Left colon (tissue), 2 donors: ENCODE measurements at regions of chr11 and their contacts with region 1.

Region 1: DNA sequence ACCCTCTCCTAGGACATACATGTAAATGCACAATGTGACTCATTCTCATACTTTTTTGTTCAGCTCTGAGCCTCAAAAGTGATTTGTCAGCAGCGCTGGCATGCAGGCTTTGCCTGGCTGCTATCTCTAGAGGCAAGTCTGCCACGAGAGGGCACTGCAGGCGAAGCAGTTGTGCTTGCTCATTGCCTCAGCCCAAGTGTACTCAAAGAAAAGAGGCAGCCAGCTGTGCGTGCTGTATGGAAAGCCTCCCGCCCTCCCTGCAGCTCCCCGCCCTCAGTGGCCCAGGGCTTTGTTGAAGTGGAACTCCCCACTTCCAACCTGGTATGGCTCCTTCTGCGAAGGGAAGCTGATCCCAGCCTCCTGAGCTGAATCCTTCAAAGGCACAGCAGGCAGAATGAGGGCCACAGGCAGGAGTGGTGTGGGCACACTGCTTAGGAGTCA is 16.3 kb downstream of the SDHAF2 start:
- DNase-seq: peak; percentile 83 to 94
- ATAC-seq: peak; percentile 93

Region 2: GRCh38 chr11:61294717-61295595 is 151.3 kb before region 1 on chr11 and contains the start of gene VWCE:
- intact Hi-C with region 1: no loop called
- DNase-seq: peak; percentile 33 to 68
- ATAC-seq: peak; percentile 87
- total RNA-seq, gene VWCE: 0.36 to 0.76 TPM

Region 3: DNA sequence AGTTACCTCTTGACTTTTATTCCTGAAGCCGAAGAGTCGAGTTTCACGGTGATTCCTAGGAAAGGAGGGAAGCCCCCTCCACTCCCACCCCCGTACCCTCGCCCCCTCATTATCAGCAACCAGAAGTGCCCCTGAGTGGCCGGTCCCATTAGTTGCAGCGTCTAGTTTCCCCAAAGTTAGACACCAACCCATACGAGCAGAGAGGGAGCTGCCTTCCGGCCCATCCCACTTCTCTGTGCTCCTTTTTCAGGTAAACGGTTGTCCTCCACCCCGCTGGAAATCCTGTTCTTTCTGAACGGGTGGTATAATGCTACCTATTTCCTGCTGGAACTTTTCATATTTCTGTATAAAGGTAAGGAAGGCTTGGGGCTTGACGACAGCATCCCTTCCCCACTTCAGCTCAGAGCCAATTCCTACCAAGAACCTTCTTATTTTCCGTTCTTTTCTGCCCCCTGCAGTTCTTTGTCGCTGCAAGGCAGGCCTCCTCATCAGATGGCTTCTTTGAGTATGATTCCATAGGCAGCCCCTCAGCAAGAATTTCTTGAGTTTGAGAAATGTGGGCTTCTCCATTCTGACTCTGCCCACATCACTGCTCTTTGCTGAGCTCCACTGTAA is 53.1 kb before region 1 on chr11:
- intact Hi-C with region 1: no loop called
- DNase-seq: no peak
- ATAC-seq: peak; percentile 42

Region 4: DNA sequence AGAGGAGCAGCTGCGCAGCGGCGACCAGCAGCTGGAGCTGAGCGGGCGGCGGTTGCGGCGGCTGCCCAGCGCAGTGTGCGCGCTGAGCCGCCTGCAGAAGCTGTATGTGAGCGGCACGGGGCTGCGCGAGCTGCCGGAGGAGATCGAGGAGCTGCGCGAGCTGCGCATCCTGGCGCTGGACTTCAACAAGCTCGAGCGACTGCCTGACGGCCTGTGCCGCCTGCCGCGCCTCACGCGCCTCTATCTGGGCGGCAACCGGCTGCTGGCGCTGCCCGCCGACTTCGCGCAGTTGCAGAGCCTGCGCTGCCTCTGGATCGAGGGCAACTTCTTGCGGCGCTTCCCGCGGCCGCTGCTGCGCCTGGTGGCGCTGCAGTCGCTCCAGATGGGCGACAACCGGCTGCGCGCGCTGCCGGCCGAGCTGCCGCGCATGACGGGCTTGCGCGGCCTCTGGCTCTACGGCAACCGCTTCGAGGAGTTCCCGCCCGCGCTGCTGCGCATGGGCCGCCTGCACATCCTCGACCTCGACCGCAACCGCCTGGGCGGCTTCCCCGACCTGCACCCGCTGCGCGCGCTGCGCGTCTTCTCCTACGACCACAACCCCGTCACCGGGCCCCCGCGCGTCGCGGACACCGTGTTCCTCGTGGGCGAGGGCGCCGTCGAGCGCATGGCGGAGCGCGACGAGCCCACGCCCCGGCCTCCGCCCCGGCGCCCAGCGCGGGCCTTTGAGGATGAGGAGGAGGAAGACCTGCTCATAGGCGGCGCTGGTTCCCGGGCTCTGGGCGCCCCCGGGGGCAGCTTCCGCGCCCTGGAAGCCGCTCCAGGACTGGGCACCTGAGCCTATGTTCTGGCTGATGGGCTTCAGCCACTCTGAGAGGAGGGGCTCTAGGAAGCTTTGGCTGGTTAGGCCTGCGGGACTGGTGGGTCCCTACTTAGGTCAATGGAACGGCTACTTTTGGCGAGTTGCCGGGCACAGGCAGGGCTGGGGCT is 63.1 kb after region 1 on chr11:
- intact Hi-C with region 1: loop called in 1 of 2 experiments (anchors 10 kb)
- DNase-seq: peak; percentile 63 to 73
- ATAC-seq: peak; percentile 68

Region 5: DNA sequence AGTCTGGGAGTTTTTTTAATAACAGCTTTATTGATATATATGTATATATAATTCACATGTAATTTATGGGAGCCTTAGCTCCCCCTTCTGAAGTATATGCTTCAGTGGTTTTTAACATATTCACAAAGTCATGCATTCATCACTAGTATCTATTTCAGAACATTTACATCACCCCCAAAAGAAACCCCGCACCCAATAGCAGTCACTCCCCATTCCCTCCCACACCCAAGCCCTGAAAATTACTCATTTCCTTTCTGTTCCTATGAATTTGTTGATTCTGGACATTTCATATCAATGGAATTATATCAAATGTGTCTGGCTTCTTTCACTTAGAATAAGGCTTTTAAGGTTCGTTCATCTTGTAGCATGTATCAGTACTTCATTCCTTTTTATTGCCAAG is 170.2 kb after region 1 on chr11:
- intact Hi-C with region 1: no loop called
- DNase-seq: no peak
- ATAC-seq: no peak

Region 6: DNA sequence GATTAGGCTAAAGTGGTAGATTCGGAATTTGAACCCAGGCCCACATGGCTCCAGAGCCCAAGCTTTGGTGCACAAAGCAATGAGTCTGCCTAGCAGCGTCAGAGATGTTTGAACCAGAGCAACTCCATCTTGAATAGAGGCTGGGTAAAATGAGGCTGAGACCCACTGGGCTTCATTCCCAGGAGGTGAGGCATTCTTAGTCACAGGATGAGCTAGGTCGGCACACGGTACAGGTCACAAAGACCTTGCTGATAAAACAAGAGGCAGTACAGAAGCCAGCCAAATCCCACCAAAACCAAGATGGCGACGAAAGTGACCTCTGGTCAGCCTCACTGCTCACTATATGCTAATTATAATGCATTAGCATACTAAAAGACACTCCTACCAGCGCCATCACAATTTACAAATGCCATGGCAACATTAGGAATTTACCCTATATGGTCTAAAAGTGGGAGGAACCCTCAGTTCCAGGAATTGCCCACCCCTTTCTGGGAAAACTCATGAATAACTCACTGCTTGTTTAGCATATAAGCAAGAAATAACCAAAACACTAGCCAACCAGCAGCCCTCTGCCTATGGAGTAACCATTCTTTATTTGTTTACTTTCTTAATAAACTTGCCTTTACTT is 193.7 kb after region 1 on chr11:
- intact Hi-C with region 1: loop called in 1 of 2 experiments (anchors 10 kb)
- DNase-seq: no peak
- ATAC-seq: no peak

Region 7: DNA sequence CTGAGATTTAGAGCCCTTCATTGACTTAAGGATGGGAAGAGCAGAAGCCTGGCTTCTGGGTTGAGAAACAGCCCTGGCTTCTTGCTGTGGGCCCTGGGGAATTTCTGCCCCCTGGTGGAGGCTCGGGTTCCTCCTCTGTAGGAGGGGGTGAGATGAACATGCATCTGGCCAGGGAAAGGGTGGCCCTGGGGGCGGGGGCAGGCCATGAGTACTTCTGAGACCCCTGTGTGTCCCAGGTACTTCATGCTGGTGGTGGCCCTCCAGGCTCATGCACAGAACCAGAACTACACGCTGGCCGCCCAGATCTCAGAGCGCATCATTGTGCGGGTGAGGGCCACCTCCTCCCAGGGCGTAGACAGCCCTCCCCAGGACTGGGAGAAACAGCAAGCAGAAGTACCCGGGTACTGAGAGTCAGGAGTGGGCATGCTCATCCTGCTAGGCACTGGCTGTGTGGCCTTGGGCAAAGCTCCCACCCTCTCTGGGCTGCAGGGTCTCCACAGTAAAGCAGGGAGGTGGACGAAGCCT is 330.4 kb after region 1 on chr11:
- intact Hi-C with region 1: no loop called
- DNase-seq: peak; percentile 54 to 79
- ATAC-seq: peak; percentile 73